ENCODE measurements at regions of chr12 and their contacts with region 1.

Region 1: DNA sequence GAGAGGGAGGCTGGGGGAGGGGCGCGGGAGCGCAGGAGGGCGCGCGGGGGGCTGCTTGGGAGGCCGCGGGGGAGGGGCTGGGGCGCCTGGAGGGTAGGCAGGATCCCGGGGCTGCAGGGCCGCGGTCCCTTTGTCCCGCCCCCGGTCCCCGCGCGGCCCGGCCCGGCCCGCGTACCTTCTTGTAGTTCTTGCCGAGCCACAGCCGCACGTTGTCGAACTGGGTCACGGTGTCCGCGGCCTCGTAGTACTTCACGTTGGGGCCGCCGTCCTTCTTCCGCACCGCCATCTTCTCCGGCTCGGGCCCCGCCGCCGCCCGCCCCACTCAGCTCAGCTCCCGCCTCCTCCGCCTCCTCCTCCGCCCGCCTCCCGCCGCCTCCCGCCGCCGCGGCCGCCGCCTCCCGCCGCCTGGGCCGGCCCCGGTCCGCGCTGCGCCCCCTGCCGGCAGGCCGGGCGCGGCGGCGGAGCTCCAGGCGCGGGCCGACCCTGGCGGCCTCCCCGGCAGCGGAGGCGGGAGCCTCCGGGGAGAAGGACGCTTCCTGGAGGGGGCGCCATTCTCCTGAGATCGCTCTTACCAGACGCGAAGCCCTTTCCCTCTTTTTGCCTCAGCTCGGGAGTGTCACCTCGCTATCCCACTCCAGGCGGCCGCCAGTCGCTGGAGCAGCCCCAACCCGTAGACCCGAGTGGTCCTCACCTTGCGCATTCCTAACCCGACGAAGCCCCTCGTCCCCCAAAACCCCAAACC is at the start of gene SMARCC2:
- DNase-seq: peak; percentile 90 to 93 (median 91)
- ATAC-seq: peak; percentile 84 to 93 (median 90)
- H3K4me3 ChIP-seq: peak within 1 kb of the TSS; percentile 57 to 80 (median 80)
- H3K27ac ChIP-seq: peak within 1 kb of the TSS; percentile 78 to 93 (median 82)
- H3K4me1 ChIP-seq: peaks cover 0 to 13% (median 6%) of the 10 kb centered on the region in 4 donors
- H3K27me3 ChIP-seq: no peaks in the 10 kb centered on the region
- CTCF ChIP-seq: peak; percentile 62 to 88 (median 72)
- POLR2A ChIP-seq: peak; percentile 12
- total RNA-seq, gene SMARCC2: 17.9 to 40.8 (median 25.7) TPM

Region 2: DNA sequence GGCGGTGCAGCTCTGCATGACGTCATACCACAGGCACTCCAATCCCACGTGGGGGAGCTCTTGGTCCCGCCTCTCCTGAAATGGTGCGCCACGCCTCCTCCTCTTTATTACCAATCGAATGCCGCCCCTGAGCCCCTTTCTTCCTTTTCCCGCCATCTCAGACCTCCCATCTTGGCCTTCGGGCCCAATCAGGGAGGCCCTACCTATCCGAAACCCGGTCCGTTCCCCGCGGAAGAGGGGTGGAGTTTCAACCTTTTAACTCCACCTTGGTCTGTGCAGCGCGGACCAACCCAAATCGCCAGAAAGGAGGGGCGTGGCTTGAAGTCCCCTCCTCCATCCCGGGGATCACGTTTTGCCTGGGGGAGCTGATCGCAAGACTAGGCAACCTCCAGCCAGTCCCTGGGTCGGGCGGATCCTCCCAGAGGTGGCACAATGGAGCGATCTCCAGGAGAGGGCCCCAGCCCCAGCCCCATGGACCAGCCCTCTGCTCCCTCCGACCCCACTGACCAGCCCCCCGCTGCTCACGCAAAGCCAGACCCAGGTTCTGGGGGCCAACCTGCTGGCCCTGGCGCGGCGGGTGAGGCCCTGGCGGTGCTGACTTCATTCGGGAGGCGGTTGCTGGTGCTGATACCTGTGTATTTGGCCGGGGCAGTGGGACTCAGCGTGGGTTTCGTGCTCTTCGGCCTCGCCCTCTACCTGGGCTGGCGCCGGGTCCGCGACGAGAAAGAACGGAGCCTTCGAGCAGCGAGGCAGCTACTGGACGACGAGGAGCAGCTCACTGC is 61.3 kb before region 1 on chr12 and contains the start of gene ESYT1:
- intact Hi-C with region 1: loop called (anchors 5 kb)
- DNase-seq: peak; percentile 98 to 100 (median 99)
- ATAC-seq: peak; percentile 84 to 95 (median 90)
- H3K4me3 ChIP-seq: peak within 1 kb of the TSS; percentile 70 to 95 (median 73)
- H3K27ac ChIP-seq: peak within 1 kb of the TSS; percentile 78 to 86 (median 85)
- H3K4me1 ChIP-seq: peaks cover 0 to 41% (median 11%) of the 10 kb centered on the region in 4 donors
- H3K27me3 ChIP-seq: no peaks in the 10 kb centered on the region
- CTCF ChIP-seq: peak in 1 of 4 donors; percentile 5
- POLR2A ChIP-seq: peak; percentile 98
- total RNA-seq, gene ESYT1: 56.5 to 117 (median 70.3) TPM